Activated CD8-positive, alpha-beta memory T cell treated with anti-CD3 and anti-CD28 coated beads, Interleukin-2, amount 10 ng/mL, durations not matched to agents 7 days and 5 days (primary cell): ENCODE measurements at regions of chr5 and their contacts with region 1.

Region 1: DNA sequence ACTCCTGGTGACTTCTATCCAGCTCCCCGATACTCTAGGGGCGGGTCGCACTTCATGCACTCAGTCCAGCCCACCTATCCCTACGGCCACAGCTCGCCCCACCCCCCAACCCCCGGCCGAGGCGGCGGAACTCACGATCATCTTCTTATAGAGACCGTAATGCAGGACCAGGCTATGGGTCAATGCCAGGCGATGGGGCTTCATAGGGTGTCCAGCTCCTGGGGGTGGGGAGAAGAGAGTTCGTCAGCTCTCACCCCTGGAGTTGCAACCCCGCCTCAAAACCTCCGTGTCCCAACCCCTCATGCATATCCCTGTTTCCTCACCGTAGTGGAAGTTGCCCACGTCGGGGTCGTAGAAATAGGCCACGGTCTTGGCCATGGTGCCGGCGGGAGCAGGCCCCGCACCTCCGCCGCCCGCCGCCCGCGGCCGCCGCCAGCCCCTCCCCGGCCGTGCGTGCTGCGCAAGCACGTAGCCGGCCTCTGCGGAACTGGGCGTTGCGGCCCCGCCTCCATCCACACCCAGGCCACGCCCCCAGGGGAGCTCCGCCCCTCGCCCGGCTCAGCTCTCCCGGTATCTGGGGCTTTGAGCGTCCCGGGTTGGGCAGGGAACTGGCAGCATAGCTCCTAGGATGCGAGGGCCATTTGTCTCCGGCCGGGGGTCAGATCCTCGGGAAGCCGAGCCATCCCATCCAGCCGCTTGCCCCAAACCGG is at the starts of genes HDAC3 and RELL2:
- DNase-seq: peak; percentile 95
- ATAC-seq: peak; percentile 82
- H3K4me3 Mint-ChIP-seq: peak within 1 kb of the TSS; percentile 93
- H3K27ac Mint-ChIP-seq: peak within 1 kb of the TSS; percentile 94
- H3K4me1 Mint-ChIP-seq: peaks cover 58% of the 10 kb centered on the region
- H3K27me3 Mint-ChIP-seq: no peaks in the 10 kb centered on the region
- total RNA-seq, gene HDAC3: 87.1 to 90.0 TPM
- total RNA-seq, gene RELL2: 28.0 to 35.8 TPM

Region 2: GRCh38 chr5:141590127-141590526 is 46.4 kb before region 1 on chr5:
- CTCF ChIA-PET with region 1: interaction called, 121 read pairs
- DNase-seq: no peak
- ATAC-seq: no peak
- H3K4me3 Mint-ChIP-seq: no peak overlapping the region
- H3K27ac Mint-ChIP-seq: no peak overlapping the region
- H3K4me1 Mint-ChIP-seq: peaks cover 32% of the 10 kb centered on the region
- H3K27me3 Mint-ChIP-seq: no peaks in the 10 kb centered on the region

Region 3: DNA sequence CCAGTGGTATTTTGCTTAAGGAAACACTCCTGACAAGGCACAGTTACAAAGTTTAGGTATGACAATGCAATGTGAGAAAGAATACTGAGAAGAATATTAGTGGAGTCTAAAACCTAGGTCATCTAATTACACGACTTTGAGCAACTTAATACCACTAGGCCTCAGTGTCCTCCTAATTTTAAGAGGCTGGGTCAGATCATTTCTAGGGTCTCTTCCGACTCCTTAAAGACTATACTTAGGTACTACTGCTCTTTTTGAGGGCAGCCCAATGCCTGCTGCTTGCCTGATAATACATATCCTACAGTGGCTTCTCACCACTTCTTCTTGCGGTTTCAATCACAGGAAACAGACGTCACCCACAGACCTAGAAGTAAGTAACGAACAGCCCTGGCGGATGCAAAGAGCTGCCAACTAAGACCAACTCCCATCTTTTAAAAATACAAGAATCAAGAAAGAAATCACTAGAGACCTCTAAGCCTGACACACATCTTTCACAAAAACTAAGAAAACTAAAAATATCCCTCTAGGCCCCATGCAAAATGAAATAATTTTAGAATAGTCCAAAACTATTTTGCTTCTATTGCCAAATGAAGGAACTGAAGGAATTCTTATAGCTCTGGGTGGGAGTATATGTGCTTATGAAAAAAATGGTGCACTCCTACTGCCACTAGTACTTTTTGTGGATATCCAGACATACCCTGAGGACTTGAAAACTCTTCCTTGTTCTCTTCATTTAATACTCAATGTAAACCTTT is 30.9 kb before region 1 on chr5:
- CTCF ChIA-PET with region 1: interaction called, 13 read pairs
- DNase-seq: peak; percentile 92
- ATAC-seq: peak; percentile 88
- H3K4me3 Mint-ChIP-seq: peak overlapping the region; percentile 68
- H3K27ac Mint-ChIP-seq: peak overlapping the region; percentile 95
- H3K4me1 Mint-ChIP-seq: peaks cover 77% of the 10 kb centered on the region
- H3K27me3 Mint-ChIP-seq: no peaks in the 10 kb centered on the region

Region 4: DNA sequence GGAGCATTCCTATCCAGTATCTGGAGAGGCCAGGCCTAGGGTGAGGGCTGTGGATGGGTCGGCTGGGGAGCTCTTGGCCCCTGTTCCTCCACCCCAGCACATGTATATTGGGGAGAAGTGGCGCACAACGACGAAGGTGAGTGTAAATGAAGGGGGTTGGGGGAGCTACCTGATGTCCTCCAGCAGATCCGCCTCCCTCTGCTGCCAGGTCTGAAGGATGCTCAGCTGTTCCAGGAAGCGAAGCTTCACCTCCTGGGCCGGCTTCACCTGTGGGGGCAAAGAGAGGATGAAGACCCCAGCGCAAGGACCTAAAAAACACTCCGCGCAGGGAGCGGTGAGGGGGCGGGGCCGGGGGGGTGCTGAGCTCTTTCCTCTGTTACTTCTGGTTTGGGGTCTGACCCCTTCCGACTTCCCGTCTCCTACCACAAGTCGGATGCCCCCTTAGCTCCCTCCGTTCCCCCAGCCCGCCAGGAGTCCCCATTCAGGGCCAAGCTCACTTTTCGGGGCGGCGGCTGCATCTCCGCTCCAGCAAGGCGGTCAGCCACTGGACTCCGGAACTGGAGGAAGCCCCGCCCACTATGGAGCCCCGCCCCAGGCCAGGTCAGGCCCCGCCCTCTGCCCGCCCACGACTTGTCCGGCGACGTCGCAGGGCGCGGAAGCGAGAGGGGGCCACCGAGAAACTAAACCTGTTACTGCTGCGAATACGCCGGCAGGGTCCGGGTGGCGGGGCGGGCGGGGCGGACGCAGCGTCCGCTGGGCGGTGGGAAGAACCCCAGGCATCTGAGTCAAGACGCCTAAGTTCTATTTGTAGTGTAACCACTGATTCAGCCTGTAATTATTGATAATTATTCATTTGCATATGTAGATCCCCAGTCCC is 14.5 kb after region 1 on chr5 and contains the start of gene FCHSD1:
- CTCF ChIA-PET with region 1: interaction called, 14 read pairs
- DNase-seq: peak; percentile 92
- ATAC-seq: peak; percentile 98
- H3K4me3 Mint-ChIP-seq: peak within 1 kb of the TSS; percentile 93
- H3K27ac Mint-ChIP-seq: peak within 1 kb of the TSS; percentile 95
- H3K4me1 Mint-ChIP-seq: peaks cover 27% of the 10 kb centered on the region
- H3K27me3 Mint-ChIP-seq: no peaks in the 10 kb centered on the region
- total RNA-seq, gene FCHSD1: 46.5 to 64.1 TPM